ENCODE measurements at regions of chr1 and their contacts with region 1.

Region 1: DNA sequence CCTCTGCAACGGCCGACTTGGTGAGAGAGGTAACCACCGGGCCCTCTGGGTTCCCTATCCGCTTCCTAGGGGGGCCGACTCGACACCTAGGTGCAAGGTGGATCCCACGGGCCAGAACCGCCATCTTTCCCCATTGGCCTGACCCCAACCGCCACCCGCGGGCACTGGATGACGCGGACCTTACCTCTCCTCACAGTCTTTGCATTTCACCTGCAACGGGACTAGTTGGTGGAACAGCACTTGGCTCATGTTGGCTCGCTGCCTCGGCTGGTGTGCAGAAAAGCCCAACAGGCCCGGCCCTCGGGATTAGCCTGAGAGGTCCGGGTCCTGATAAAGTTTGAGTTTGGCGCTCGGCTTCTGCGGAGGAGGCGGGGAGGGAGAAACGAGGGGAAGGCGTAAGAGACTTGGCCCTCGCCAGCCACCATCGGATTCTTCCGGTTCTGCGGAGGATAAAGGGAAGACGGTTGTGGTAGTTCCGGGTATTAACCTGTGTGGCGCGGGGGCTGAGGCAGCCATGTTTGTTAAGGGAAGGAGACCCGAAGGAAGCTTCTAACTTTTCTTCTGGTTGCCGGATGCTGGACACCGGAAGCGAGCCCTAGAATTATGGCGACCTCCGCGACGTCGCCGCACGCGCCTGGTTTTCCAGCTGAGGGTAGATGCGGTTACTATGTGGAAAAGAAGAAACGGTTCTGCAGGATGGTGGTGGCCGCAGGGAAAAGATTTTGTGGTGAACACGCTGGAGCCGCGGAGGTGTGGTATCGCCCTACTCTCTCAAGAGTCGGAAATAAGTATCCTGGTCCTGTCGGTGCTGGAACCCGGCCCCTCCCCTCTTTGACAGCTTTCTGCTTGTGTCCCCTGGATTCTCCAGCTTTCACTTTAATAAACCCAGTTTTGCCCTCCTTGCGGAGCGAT is at the starts of genes SASS6 and TRMT13:
- DNase-seq: peak; percentile 88 to 97
- ATAC-seq: peak; percentile 96 to 99 (median 97)
- H3K4me3 ChIP-seq: peak within 1 kb of the TSS; percentile 85
- H3K4me3 Mint-ChIP-seq: peak within 1 kb of the TSS; percentile 97
- H3K27ac ChIP-seq: peak within 1 kb of the TSS; percentile 62
- H3K27ac Mint-ChIP-seq: peak within 1 kb of the TSS; percentile 92 to 93
- H3K4me1 ChIP-seq: peaks cover 10% of the 10 kb centered on the region
- H3K4me1 Mint-ChIP-seq: peaks cover 21 to 32% of the 10 kb centered on the region in 2 donors
- H3K27me3 ChIP-seq: no peaks in the 10 kb centered on the region
- H3K27me3 Mint-ChIP-seq: no peaks in the 10 kb centered on the region
- CTCF ChIP-seq: no peak
- total RNA-seq, gene SASS6: 5.3 to 6.2 (median 5.6) TPM
- total RNA-seq, gene TRMT13: 12.7 to 22.3 (median 13.4) TPM

Region 2: GRCh38 chr1:99808391-99809115 is 324.3 kb before region 1 on chr1:
- intact Hi-C with region 1: loop called (anchors 1 kb)
- DNase-seq: peak in 1 of 2 donors; percentile 82
- ATAC-seq: peak; percentile 78 to 90 (median 88)
- H3K4me3 ChIP-seq: no peak overlapping the region
- H3K4me3 Mint-ChIP-seq: no peak overlapping the region
- H3K27ac ChIP-seq: no peak overlapping the region
- H3K27ac Mint-ChIP-seq: no peak overlapping the region
- H3K4me1 ChIP-seq: no peaks in the 10 kb centered on the region
- H3K4me1 Mint-ChIP-seq: no peaks in the 10 kb centered on the region
- H3K27me3 ChIP-seq: no peaks in the 10 kb centered on the region
- H3K27me3 Mint-ChIP-seq: peaks cover 7 to 8% of the 10 kb centered on the region in 2 donors
- CTCF ChIP-seq: peak; percentile 84

Region 3: GRCh38 chr1:99969729-99970621 is 162.8 kb before region 1 on chr1 and contains the start of gene SLC35A3:
- intact Hi-C with region 1: loop called (anchors 5 kb)
- DNase-seq: peak; percentile 75 to 87
- ATAC-seq: peak; percentile 83 to 91 (median 87)
- H3K4me3 ChIP-seq: peak within 1 kb of the TSS; percentile 94
- H3K4me3 Mint-ChIP-seq: peak within 1 kb of the TSS; percentile 97
- H3K27ac ChIP-seq: peak within 1 kb of the TSS; percentile 83
- H3K27ac Mint-ChIP-seq: peak within 1 kb of the TSS; percentile 93 to 98
- H3K4me1 ChIP-seq: peaks cover 10% of the 10 kb centered on the region
- H3K4me1 Mint-ChIP-seq: peaks cover 27 to 31% of the 10 kb centered on the region in 2 donors
- H3K27me3 ChIP-seq: no peaks in the 10 kb centered on the region
- H3K27me3 Mint-ChIP-seq: no peaks in the 10 kb centered on the region
- CTCF ChIP-seq: no peak
- total RNA-seq, gene SLC35A3: 40.2 to 49.8 (median 43.1) TPM

Region 4: DNA sequence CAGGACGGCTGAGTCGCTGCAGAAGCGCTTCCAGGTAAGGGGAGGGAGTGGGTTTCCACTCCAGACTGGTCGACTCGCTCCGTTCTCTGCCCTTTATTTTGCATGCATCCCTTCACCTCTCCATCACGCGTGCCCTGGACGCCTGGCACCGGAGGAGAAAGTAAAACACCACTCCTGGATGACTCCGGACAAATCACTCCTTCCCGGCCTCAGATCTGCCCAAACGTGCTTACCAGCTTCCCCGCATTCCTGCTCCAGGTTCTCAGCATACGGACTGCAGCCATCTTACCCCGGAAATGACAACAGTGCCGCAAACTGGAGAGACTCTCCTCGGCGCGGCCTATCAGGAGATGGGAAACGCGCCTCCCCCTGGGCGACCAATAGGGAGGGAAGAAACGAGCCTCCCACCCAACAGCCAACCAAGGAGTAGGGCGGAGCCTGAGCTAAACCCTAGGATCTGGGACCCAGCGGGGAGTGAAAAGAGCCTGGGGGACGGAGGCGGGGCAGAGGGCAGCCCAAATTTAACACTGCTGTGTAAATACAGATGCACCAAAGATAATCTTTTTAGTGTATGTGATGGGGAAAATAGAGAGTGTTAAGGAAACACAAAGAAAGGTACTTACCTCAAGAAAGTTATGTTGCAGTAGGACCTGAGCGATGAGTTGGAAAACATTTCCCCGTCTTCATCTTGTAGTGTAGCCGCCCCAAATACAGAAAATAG is 116.9 kb after region 1 on chr1 and contains the start of gene DBT:
- intact Hi-C with region 1: loop called (anchors 2 kb)
- DNase-seq: peak; percentile 80 to 95
- ATAC-seq: peak; percentile 99 to 100 (median 100)
- H3K4me3 ChIP-seq: peak within 1 kb of the TSS; percentile 84
- H3K4me3 Mint-ChIP-seq: no peak within 1 kb of the TSS
- H3K27ac ChIP-seq: peak within 1 kb of the TSS; percentile 74
- H3K27ac Mint-ChIP-seq: no peak within 1 kb of the TSS
- H3K4me1 ChIP-seq: peaks cover 7% of the 10 kb centered on the region
- H3K4me1 Mint-ChIP-seq: peaks cover 0 to 10% of the 10 kb centered on the region in 2 donors
- H3K27me3 ChIP-seq: no peaks in the 10 kb centered on the region
- H3K27me3 Mint-ChIP-seq: peaks cover 3 to 10% of the 10 kb centered on the region in 2 donors
- CTCF ChIP-seq: no peak
- total RNA-seq, gene DBT: 9.9 to 11.5 (median 10.2) TPM

Region 5: DNA sequence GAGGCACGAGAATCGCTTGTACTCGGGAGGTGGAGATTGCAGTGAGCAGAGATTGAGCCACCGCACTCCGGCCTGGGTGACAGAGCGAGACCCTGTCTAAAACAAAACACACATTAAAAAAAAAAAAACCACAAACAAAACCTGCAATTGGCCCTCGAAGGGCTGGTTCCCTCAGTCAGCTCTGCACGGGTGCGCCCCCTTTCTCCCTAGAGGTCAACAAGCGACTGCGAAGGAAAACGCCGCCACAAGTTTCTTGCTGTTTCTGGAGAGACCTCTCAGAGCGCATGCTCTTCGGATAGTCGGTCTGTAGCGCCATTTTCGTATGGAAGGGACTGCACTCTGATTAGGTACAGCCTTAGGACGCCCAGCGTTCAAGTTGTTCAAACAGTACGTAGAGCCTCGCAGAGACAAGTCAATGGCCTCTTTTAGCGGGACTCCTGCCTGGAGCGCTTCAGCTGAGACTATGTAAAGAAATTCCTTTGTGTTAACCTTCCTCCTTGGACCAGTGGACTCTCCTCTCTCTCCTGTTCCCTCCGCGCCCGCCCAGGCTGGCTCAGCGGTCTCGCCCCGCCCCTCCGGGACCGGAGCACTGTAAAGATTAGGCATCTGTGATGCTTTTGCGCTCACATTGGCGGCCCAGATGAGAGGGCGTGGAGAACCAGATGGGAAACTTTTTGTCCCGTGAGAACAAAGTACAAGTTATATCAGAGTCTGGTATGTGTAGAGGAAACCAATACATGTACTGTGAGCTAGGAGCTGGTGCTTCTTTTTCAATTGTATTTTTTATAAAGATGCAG is 218.5 kb after region 1 on chr1:
- intact Hi-C with region 1: loop called (anchors 5 kb)
- DNase-seq: peak; percentile 78 to 94
- ATAC-seq: peak; percentile 65 to 79 (median 65)
- H3K4me3 ChIP-seq: peak overlapping the region; percentile 79
- H3K4me3 Mint-ChIP-seq: peak overlapping the region; percentile 91
- H3K27ac ChIP-seq: peak overlapping the region; percentile 81
- H3K27ac Mint-ChIP-seq: peak overlapping the region; percentile 89 to 92
- H3K4me1 ChIP-seq: peaks cover 16% of the 10 kb centered on the region
- H3K4me1 Mint-ChIP-seq: peaks cover 39 to 46% of the 10 kb centered on the region in 2 donors
- H3K27me3 ChIP-seq: no peaks in the 10 kb centered on the region
- H3K27me3 Mint-ChIP-seq: no peaks in the 10 kb centered on the region
- CTCF ChIP-seq: no peak